Left ventricle myocardium superior (tissue), 1 donor: ENCODE measurements at regions of chr20 and their contacts with region 1.

Region 1: GRCh38 chr20:47663333-47664067 is 121.8 kb downstream of the SULF2 start:
- DNase-seq: peak; percentile 83
- ATAC-seq: peak; percentile 83

Region 2: GRCh38 chr20:47610247-47610944 is 53.1 kb before region 1 on chr20:
- intact Hi-C with region 1: no loop called
- DNase-seq: no peak
- ATAC-seq: peak; percentile 66

Region 3: GRCh38 chr20:47839200-47839599 is 175.7 kb after region 1 on chr20:
- intact Hi-C with region 1: no loop called
- DNase-seq: no peak
- ATAC-seq: no peak

Region 4: DNA sequence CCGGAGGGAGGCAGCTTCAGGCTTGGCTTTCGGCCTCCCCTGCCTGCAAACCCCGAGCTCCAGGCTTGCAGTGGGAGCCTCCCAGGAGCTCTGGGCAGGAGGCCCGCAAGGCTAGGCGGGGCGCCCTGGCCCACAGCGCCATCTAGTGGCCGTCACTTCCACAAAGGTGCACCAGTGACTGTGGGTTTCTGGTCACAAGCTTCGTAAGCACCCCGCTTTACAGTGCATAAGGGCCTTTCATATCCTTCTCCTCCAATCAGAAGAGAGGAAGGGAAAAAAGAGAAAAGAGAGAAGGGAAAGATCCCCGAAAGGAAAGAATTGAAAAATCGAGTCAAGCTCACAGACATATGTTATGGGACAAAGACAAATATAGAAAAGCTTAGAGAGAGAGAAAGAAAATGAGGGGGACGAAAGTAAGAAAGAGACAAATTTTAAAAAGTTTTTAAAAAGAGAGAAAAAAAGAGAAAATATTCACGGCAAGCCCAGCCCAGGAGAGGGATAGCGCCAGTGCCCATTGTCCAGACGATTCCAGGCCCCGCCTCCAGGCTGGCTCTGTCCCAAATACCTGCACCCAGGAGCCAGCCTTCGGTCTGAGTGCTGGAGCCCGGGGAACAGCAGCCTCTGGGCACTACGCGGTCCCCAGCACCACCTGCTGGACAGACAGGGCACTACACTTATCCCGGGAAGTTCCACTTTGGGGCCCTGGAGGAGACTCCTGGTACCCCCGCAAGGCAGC is 957.2 kb after region 1 on chr20:
- intact Hi-C with region 1: loop called (anchors 5 kb)
- DNase-seq: peak; percentile 94
- ATAC-seq: peak; percentile 94